GM13976 (cell line): ENCODE measurements at regions of chr12 and their contacts with region 1.

Region 1: DNA sequence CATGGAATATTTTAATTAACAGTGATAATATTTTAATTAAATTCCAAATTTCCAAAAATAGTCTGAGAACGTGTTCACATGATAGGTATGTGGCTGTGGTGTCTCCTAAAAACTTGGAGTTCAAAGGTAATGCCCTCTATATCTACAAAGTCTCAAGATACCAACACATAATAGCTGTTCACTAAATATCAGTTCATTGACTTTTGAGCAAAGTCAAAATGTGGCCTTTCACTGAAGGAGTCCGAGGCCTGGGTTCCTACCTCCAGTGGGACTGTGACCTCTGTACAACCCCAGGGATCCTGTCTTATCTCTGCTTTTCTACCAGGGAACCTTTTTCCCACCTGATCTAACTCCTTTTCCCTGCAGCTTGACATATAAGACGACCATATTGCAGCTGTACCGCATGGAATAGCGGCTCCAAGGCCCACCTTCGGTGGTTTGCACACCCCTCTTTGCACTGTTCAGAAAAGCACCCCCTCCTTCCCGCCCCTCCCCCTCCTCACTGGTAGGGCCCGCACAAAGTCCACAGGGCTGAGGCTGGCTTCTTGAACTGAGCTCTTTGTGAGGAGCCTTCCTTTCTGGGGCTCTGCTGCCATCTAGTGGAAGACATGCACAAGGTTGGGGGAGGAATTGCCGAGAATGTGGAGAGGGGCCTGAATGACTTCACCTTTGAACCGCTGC is 3.1 kb downstream of the CCND2 start:
- DNase-seq: peak; percentile 82
- CTCF ChIP-seq: peak; percentile 84

Region 2: DNA sequence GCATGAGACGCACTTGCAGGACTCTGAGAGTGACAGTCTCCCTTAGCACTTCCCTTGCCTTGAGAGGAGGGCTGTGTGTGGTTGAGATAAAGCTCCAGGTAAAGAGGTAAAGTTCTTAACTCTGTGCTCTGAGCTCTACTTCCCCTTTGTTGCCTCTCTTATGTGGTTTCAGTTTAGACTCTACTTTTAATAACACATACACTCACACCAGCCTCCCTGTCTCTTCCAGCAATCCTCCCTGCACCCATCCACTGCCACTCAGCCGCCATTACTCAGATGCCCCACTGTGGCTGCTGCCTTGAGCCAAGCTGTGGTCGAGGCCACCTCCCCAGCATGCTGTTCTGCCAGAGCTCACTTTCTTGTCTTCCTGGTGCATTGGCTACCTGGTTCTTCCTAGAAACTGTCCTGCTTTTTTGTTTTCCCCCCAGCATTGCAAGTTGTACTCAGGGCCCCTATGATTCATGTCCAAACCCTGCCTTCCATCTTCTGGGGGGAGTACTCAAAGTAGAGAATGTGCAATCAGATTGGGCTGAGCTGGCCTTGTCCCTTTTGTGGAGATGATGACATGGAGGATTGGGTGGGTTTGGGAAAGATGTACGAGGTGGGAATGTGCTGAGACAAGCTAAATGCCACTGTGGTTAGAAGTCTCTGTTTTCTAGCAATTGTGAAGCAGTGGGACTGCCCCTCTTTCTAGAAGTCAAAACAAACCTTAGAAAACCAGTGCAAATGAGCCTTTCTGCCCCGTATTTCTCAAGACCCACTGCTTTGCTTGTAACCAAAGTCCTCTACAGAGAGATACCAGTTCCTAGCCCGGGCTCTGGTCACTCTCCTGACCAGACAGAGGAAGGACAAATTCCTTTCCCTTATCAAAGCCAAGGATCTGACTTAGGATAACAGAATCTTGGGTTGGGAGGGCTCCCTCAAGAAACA is 287.9 kb before region 1 on chr12:
- in situ Hi-C with region 1: loop called (anchors 25 kb)
- DNase-seq: peak; percentile 47
- CTCF ChIP-seq: no peak

Region 3: GRCh38 chr12:4107436-4107878 is 169.2 kb before region 1 on chr12:
- in situ Hi-C with region 1: loop called (anchors 5 kb)
- DNase-seq: peak; percentile 83
- CTCF ChIP-seq: peak; percentile 72